A549 (cell line): ENCODE measurements at regions of chr2 and their contacts with region 1.

Region 1: DNA sequence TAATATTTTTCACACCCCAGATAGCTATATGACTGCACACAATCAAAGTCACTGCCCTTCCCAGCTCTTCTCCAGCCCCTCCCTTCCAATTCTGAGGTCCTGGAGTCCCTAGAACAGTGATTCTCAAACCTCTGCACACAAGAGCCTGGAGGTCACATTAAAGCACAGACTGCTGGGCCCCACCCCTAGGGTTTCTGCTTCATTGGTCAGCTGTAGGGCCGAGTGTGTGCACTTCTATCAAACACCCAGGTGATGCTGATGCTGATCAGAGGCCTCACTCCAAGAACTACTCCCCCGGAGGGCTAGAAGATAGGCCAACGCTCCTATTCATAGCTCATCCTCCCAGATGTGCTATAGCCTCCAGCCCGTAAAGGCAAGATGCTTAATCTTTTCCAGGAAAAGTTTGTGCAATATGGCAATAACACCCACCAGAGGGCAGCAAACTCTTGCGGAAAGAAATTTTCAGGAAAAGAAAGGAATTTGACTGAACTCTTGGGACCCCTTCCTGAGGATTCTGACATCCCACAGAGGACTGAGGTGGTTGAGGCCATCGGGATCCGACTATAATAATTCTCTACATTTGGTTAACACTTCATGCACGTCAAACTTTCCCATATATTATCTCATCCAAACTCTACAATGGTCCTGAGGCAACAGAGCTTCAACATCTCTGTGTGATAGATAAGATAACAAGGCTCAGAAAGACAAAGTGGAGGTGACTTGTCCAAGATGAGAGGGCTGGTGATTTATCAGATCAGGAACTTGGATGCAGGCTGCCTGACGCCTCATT is 194.2 kb upstream of the PKDCC start:
- DNase-seq: peak; percentile 61 to 77
- ATAC-seq: peak; percentile 83; a peak in 5 of 6 replicates
- H3K4me3 ChIP-seq: no peak overlapping the region
- H3K27ac ChIP-seq: peak overlapping the region; percentile 57 to 70
- H3K4me1 ChIP-seq: peaks cover 28% of the 10 kb centered on the region
- CTCF ChIP-seq: peak; percentile 98
- EP300 ChIP-seq: no peak
- POLR2A ChIP-seq: no peak
- RAD21 ChIP-seq: peak; percentile 99

Region 2: DNA sequence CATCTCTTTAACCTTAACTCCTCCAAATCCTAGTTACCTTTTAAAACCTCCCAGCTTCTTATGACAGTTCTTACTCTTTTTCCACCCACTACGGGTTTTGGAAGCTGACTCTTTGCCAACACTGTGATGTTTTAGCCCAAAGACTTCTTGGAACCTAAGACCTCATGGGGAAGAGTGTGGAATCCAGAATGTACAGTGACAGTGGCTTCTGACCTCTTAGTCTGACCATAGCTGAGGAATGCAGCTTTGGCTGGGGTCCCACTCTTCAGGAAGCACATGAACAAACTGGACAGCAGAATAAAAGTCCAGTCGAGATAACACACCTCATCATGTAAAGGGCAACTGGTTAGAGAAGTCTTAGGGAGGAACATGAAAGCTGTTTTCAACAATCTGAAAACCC is 33.1 kb after region 1 on chr2:
- CTCF ChIA-PET with region 1: interaction called, 12 read pairs
- POLR2A ChIA-PET with region 1: no interaction called
- DNase-seq: no peak
- ATAC-seq: no peak
- H3K4me3 ChIP-seq: no peak overlapping the region
- H3K27ac ChIP-seq: 0 out of 6 replicates have a peak overlapping the region, but pooled peaks of 1 of the 2 experiments have one; percentile 6
- H3K4me1 ChIP-seq: 0 out of 3 replicates have a peak, but pooled peaks cover 4% of the 10 kb centered on the region
- CTCF ChIP-seq: no peak
- EP300 ChIP-seq: no peak
- POLR2A ChIP-seq: no peak
- RAD21 ChIP-seq: no peak

Region 3: DNA sequence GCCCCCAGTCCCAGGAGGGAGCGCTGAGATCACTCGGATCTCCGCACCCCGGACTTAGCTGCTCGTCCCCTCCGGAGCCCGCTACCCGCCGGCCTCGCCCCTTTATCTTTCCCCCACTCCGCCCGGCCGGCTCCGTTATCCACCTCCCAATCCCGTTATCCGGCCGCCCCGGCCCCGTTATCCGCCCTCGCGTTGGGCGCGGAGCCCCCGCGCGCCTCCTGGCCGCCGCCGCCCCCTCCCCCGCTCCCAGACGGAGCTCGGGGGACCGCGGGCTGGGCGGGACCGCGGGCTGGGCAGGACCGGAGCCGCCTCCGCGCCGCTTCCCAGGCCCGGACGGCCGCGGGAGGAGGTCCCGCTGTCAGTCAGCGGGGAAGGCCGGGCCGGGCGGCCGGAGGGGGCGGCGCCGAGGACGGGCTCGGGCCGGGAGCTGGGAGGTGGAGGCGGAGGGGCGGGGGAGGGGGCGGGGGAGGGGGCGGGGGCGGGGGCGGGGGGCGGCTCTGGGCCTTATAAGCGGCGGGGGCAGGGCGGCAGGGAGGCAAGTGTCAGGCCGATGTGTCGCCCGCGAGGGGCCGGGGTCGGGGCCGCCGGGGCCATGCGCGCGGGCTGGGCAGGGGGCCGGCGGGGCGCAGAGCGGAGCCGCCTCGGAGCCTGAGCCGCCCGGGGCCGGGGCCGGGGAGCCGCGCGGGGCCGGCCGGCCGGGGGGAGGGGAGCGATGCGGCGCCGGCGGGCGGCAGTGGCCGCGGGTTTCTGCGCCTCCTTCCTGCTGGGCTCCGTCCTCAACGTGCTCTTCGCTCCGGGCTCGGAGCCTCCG is 194.1 kb after region 1 on chr2 and contains the start of gene PKDCC:
- CTCF ChIA-PET with region 1: interaction called, 10 read pairs
- POLR2A ChIA-PET with region 1: no interaction called
- DNase-seq: peak; percentile 84 to 91
- ATAC-seq: peak; percentile 76 to 83
- H3K4me3 ChIP-seq: peak within 1 kb of the TSS; percentile 63
- H3K27ac ChIP-seq: peak within 1 kb of the TSS; percentile 79 to 96
- H3K4me1 ChIP-seq: peaks cover 52% of the 10 kb centered on the region
- CTCF ChIP-seq: no peak
- EP300 ChIP-seq: no peak
- POLR2A ChIP-seq: peak; percentile 41; the same call in 1 of the 2 replicates
- RAD21 ChIP-seq: 0 out of 5 replicates have a peak, but pooled peaks have one; percentile 5 to 23
- polyA plus RNA-seq, gene PKDCC: 30.0 and 42.9 TPM in 2 replicates

Region 4: DNA sequence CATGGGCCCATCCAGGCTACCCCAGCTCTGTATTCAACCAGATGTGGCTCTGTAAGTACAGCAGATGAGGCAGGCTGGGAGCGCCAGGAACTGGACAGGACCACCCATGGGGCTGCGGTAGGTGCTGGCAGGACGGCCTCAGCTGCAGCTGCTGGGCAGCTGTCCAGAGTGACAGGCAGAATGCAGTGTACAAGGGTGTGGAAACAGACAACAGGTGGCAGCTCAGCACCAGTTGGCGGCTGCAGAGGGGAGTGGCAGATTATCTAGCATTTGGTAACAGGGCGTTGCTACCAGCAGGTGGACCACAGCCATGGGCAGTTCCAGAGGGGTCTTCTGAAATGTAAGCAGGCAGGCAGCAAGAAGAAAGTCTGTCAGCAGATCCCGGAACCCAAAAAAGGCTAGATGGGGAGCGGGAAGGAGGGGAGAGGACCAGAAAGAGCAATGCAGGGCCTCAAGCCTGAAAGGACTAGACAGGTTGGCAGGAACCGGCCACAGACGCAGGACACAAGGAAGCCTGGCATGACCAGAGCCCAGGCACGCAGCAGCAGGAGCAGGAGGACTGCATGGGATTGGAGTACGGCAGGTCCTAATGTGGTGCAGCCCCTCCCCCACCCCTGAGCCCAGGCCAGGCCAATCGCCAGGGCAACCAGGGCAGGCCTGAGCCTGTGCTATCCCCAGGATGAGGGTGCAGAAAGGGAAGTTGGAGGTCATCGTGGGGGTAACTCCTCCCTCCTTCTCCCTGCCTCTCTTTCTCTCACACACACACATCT is 218.9 kb after region 1 on chr2:
- CTCF ChIA-PET with region 1: interaction called, 26 read pairs
- POLR2A ChIA-PET with region 1: no interaction called
- DNase-seq: no peak
- ATAC-seq: peak; percentile 36 to 56; a peak in 4 of 6 replicates
- H3K4me3 ChIP-seq: no peak overlapping the region
- H3K27ac ChIP-seq: peak overlapping the region in 1 of 2 experiments; percentile 9; a peak in 4 of 6 replicates
- H3K4me1 ChIP-seq: peaks cover 17% of the 10 kb centered on the region; the same call in 2 of the 3 replicates
- CTCF ChIP-seq: no peak
- EP300 ChIP-seq: no peak
- POLR2A ChIP-seq: no peak
- RAD21 ChIP-seq: peak in 1 of 2 experiments; percentile 25; a peak in 1 of 5 replicates

Region 5: GRCh38 chr2:42105330-42106256 is 252.0 kb after region 1 on chr2:
- CTCF ChIA-PET with region 1: interaction called, 12 read pairs
- POLR2A ChIA-PET with region 1: no interaction called
- DNase-seq: no peak
- ATAC-seq: no peak
- H3K4me3 ChIP-seq: no peak overlapping the region
- H3K27ac ChIP-seq: peak overlapping the region in 1 of 2 experiments; percentile 20; a peak in 1 of 6 replicates
- H3K4me1 ChIP-seq: peaks cover 14% of the 10 kb centered on the region
- CTCF ChIP-seq: no peak
- EP300 ChIP-seq: no peak
- POLR2A ChIP-seq: no peak
- RAD21 ChIP-seq: no peak

Region 6: DNA sequence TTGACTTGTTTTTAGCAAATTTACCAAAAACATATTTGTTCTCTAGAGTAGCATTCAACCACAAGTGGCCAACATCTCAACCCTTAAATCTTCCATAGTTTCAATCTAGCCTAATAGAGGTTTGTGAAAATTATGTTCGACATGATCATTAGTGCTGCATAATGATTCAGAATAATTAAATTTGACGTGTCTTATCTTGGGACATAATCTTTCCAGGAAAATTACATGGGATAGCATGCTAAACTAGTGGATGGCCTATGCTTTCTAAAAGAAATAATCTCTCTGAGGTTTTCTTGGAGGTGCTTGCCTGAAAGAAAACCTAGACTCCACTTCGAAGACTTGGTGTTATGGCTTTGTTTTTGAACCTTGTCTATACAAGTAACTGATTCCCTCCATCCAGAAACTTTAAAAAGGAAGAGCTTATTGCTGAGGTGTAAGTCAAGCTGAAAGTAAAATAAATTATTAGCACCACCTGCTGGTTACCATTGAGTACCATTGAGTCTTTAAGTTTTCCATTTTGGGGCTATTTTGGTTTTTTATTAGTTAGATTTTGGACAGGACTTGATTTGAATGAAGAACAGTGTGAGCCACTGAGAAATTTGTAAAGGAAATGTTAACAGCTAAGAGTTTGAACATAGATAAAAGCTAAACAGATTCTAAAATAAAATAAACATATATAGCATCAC is 474.7 kb after region 1 on chr2:
- CTCF ChIA-PET with region 1: interaction called, 17 read pairs
- POLR2A ChIA-PET with region 1: no interaction called
- DNase-seq: peak; percentile 36 to 49
- ATAC-seq: peak; percentile 65 to 81; a peak in 4 of 6 replicates
- H3K4me3 ChIP-seq: no peak overlapping the region
- H3K27ac ChIP-seq: no peak overlapping the region
- H3K4me1 ChIP-seq: peaks cover 18% of the 10 kb centered on the region
- CTCF ChIP-seq: peak; percentile 83
- EP300 ChIP-seq: no peak
- POLR2A ChIP-seq: no peak
- RAD21 ChIP-seq: peak; percentile 77 to 84